ENCODE measurements at regions of chr3 and their contacts with region 1.

Region 1: DNA sequence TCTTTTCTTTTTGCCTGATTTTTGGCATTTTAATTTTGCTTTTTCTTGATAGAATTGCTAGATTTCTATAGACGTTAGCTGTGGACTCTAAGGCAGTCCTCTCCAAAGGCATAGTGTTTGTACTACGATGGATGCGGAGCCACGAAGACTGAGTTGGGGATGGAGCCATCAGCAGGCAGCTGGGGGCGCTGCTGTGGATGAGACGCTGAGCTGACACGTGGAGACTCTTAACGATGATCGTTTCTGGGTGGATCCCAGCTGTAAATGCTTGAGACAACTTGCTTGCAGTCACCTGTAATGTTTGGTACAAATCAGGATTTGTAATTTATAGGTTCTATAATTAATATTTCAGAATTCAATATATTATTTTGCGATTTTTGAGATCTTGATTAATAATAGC is 13.3 kb upstream of the PPP1R2 start:
- DNase-seq: peak; percentile 45

Region 2: DNA sequence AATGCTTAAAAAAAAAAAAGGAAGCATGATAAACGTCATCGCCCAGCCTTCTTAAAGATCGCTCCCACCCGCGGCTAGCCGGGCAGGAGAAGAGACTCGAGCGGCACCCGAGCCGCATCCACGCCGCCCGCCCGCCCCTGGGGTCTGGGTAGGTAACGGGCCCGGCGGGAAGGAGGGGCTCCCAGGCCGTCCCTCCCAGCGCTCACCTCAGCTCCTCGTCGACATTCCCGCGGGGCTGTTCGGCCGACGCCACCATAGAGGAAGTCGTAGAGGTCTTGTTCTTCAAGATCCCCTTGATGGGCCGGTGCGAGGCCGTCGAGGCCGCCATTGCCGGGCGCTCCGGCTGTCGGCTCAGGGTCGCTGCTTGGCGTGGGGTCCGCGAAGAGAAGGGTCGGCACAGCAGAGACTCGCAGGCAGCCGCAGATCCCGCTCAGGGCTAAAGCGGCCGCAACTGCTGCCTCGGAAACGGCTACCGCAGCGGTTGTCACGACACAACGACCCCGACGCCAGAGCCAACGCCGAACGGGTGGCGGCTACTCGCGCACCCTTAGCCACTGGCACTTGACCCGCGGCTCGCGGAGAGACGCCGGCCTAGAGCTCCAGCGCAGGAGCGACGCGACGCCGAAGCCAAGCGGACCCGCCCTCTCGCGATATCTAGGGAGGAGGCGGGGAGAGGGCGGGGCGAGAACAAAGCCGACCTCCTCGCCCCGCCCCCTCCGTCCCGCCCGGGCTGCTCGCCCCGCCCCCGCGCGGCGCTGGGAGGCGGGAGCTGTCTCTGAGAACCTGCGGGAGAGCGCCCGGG is 13.5 kb before region 1 on chr3 and contains the start of gene PPP1R2:
- CTCF ChIA-PET with region 1: no interaction called
- POLR2A ChIA-PET with region 1: interaction called, 10 read pairs
- DNase-seq: peak; percentile 89